ENCODE measurements at regions of chr1 and their contacts with region 1.

Region 1: GRCh38 chr1:99707535-99708142 is 58.8 kb downstream of the FRRS1 start:
- DNase-seq: peak; percentile 67
- H3K4me3 ChIP-seq: no peak overlapping the region
- H3K27ac ChIP-seq: no peak overlapping the region
- H3K4me1 ChIP-seq: no peaks in the 10 kb centered on the region
- CTCF ChIP-seq: peak; percentile 100

Region 2: DNA sequence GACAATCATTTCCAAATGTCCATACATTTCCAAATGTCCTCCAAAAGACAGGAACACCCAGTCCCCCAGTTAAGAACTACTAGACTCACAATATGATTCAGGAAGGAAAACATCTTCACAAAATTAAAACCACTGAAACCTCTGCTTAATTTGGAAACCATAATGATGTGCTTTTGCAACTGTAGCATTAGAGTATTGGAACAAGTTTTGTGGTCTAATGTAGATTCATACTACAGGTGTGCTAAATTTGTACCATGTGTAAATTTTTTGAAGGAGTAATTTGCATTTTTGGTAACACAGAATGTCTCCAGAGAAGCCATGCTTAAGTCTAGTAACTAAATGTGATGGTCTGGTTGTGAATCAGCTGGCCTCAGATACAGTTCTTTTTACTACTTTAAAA is 1916.4 kb before region 1 on chr1:
- CTCF ChIA-PET with region 1: no interaction called
- POLR2A ChIA-PET with region 1: no interaction called
- intact Hi-C with region 1: no loop called
- DNase-seq: no peak
- H3K4me3 ChIP-seq: no peak overlapping the region
- H3K27ac ChIP-seq: no peak overlapping the region
- H3K4me1 ChIP-seq: no peaks in the 10 kb centered on the region
- CTCF ChIP-seq: no peak

Region 3: DNA sequence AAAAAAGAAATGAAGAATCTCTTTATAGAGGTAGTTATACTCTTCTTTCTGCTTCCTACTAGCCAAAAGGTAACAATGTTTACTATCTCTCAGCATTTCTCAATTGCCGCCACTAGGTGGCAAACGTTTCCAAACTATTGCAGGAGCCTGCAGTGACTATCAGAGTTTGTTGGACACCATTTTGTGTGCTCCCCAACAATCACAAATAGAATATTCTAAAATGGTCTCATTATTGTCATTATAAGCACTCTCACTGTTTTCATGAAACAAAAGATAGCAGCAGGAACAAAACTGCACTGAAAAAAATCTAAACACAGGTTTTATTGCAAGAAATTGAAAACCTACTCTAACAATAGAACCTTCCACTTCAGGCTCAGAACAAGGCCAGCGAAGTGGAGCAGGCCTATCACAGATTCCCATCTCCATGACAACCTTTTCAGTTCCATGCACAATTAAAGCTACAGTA is 527.3 kb before region 1 on chr1:
- CTCF ChIA-PET with region 1: no interaction called
- POLR2A ChIA-PET with region 1: no interaction called
- intact Hi-C with region 1: loop called (anchors 1 kb)
- DNase-seq: peak; percentile 72
- H3K4me3 ChIP-seq: no peak overlapping the region
- H3K27ac ChIP-seq: no peak overlapping the region
- H3K4me1 ChIP-seq: no peaks in the 10 kb centered on the region
- CTCF ChIP-seq: peak; percentile 93

Region 4: DNA sequence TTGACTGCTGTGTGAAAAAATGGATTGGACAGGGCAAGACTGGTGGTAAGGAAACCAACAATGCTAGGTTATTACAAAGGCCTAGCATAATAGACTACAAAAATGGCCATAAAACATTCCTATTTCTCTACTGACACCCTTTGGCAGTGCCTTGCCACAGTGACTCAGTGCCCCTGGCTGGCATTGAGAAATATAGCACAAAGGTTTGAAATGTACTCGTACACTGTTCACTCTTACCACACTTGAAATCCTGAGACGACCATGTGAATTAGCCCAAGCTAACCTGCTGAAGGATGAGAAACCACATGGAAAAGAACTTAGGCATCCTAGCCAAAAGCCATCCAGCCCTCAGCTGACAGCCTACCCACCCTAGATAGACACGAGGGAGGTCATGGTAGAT is 211.6 kb before region 1 on chr1:
- CTCF ChIA-PET with region 1: no interaction called
- POLR2A ChIA-PET with region 1: no interaction called
- intact Hi-C with region 1: loop called (anchors 10 kb)
- DNase-seq: no peak
- H3K4me3 ChIP-seq: no peak overlapping the region
- H3K27ac ChIP-seq: no peak overlapping the region
- H3K4me1 ChIP-seq: no peaks in the 10 kb centered on the region
- CTCF ChIP-seq: no peak

Measured in OCI-LY7 (cell line).